Psoas muscle (tissue), 8 donors: ENCODE measurements at regions of chr9 and their contacts with region 1.

Region 1: GRCh38 chr9:93159601-93160471 is 24.1 kb upstream of the WNK2 start:
- DNase-seq: peak; percentile 82 to 93
- ATAC-seq: peak; percentile 93 to 99 (median 97)
- H3K4me3 ChIP-seq: peak overlapping the region; percentile 41
- H3K27ac ChIP-seq: no peak overlapping the region
- H3K4me1 ChIP-seq: peaks cover 9% of the 10 kb centered on the region
- H3K27me3 ChIP-seq: no peaks in the 10 kb centered on the region
- CTCF ChIP-seq: peak; percentile 97

Region 2: GRCh38 chr9:92770360-92770995 is 389.4 kb before region 1 on chr9:
- intact Hi-C with region 1: no loop called
- DNase-seq: no peak
- ATAC-seq: peak in 1 of 4 donors; percentile 22
- H3K4me3 ChIP-seq: no peak overlapping the region
- H3K27ac ChIP-seq: no peak overlapping the region
- H3K4me1 ChIP-seq: peaks cover 8% of the 10 kb centered on the region
- H3K27me3 ChIP-seq: no peaks in the 10 kb centered on the region
- CTCF ChIP-seq: no peak

Region 3: DNA sequence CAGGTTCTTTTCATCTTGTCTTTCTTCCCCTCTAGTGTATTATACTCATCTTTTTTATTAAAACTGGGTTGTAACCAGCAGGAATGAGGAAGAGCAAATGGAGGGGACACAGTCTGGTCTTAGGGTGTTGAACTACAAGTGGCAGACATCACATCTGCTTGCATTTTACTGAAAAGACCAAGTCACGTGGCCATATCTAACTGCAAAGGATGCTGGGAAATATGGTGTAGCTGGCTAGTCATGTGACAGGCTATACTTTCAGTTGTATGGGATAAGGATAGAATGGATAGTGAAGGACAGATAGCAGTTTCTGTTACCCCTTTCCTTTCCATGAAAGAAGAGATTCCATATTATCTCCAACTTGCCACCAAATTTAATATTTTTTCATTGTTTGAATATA is 225.5 kb before region 1 on chr9:
- intact Hi-C with region 1: no loop called
- DNase-seq: no peak
- ATAC-seq: no peak
- H3K4me3 ChIP-seq: no peak overlapping the region
- H3K27ac ChIP-seq: no peak overlapping the region
- H3K4me1 ChIP-seq: no peaks in the 10 kb centered on the region
- H3K27me3 ChIP-seq: no peaks in the 10 kb centered on the region
- CTCF ChIP-seq: no peak

Region 4: DNA sequence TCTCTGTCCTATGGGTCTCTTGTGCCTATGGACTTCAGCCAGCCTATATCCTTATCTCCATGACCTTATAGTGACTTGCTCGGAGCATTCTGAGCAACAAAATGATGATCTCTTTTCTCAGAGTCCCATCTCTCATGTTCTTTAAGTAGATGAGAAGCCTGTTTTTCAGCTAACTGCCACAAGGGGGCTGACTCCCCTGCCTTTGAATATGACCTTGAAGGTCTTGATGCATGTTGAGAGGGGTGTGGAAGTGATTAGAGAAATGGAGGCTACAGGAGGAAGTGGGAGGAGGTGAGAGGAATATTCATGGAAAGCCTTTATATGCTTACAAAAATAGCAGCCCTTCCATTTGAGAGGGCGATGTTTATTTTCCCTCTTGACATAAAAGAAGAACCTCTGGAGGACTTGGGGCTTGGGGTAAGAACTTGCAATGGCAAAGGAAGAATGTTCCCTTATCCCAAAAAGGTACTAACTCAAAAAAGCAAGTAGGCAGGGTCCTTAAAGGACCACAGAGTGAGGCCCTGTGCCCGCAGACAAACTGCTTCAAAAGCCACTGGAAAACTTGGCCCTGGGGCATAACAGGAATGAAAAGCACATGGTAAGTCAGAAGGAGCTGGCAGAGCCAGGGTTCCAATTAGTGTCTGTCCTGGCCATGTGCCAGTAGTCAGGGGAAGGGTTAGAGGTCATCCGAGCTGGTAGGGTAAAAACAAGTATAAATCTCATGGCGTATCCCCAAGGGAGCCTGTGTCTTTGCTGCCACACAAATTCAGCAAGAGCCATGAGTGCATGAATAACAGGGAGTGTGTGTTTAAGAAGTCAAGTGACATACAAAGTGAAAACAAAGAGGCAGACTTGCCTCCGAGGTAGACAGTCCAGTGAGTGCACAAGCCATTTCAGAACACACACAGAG is 173.4 kb before region 1 on chr9:
- intact Hi-C with region 1: no loop called
- DNase-seq: no peak
- ATAC-seq: no peak
- H3K4me3 ChIP-seq: no peak overlapping the region
- H3K27ac ChIP-seq: no peak overlapping the region
- H3K4me1 ChIP-seq: no peaks in the 10 kb centered on the region
- H3K27me3 ChIP-seq: no peaks in the 10 kb centered on the region
- CTCF ChIP-seq: peak; percentile 35

Region 5: GRCh38 chr9:93111371-93112115 is 48.3 kb before region 1 on chr9:
- intact Hi-C with region 1: loop called in 1 of 2 experiments (anchors 5 kb)
- DNase-seq: peak; percentile 25 to 46
- ATAC-seq: no peak
- H3K4me3 ChIP-seq: no peak overlapping the region
- H3K27ac ChIP-seq: no peak overlapping the region
- H3K4me1 ChIP-seq: peaks cover 14% of the 10 kb centered on the region
- H3K27me3 ChIP-seq: no peaks in the 10 kb centered on the region
- CTCF ChIP-seq: no peak

Region 6: DNA sequence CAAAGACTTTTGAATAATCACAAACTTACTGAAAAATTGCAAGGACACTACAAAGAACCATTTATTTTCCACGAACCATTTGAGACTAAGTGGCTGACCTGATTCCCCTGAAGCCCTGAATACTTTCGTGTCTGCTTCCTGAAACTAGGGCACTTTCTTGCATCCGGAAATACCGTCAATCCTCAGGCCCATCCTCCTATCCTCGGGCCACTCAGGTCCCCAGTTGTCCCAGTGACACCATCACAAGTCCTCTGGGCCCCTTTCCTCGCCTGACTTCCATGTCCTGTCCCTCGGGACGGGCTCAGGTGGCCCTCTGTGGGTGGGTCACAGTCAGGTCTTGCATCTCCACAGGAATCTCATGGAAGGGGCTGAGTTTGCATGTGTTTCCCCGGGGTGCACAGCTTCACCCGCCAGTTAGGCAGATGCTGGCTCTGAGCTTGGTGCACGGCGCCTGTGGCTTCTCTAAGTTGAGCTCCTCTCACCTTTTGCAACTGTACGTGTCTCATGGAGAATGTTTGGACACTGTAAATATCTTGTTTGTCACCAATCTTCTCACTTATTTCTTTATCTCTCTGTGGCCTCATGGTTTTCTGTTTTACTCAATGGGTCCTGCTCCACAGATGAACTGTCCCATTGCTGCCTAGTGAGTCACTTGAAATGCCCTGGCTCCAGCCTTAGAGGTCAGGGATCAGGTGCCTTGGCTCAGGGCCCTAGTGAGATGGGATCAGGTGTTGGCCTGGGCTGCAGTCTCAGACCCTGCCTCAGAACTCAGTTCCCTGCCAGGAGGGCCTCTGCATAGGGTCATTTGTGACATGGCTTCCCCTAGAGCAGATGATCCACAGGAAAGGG is 85.5 kb after region 1 on chr9:
- intact Hi-C with region 1: loop called in 1 of 2 experiments (anchors 5 kb)
- DNase-seq: peak; percentile 16 to 67
- ATAC-seq: peak; percentile 66 to 84 (median 80)
- H3K4me3 ChIP-seq: no peak overlapping the region
- H3K27ac ChIP-seq: no peak overlapping the region
- H3K4me1 ChIP-seq: peaks cover 22% of the 10 kb centered on the region
- H3K27me3 ChIP-seq: no peaks in the 10 kb centered on the region
- CTCF ChIP-seq: no peak

Region 7: DNA sequence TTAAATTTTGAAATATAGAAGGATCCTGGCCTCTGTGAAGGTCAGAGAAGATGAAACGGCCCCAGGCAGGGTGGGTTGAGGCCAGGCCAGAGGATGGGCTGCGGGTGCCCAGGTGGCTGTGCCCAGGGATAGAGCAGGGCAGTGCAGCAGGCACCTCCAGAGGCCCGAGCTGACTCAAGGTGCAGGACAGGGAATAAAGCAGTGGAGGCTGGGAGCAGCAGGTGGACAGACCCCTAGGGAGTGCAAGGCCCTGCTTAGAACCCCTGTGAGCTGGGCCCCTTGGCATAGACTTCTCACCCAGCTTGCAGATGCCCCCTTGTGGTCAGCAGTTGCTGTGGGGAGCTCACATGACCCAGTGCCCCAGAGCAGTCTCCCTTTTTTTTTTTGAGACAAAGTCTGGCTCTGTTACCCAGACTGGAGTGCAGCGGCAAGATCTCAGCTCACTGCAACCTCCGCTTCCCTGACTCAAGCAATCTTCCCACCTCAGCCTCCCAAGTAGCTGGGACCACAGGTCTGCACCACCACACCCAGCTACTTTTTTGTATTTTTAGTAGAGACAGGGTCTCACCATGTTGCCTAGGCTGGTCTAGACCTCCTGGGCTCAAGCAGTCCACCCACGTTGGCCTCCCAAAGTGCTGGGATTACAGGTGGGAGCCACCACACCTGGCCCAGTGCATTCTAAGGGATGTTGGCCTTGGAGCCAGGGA is 142.9 kb after region 1 on chr9:
- intact Hi-C with region 1: loop called (anchors 1 to 2 kb)
- DNase-seq: peak in 1 of 2 donors; percentile 47
- ATAC-seq: peak in 1 of 4 donors; percentile 42
- H3K4me3 ChIP-seq: no peak overlapping the region
- H3K27ac ChIP-seq: no peak overlapping the region
- H3K4me1 ChIP-seq: peaks cover 48% of the 10 kb centered on the region
- H3K27me3 ChIP-seq: no peaks in the 10 kb centered on the region
- CTCF ChIP-seq: peak; percentile 44

Region 8: GRCh38 chr9:93566408-93567270 is 406.8 kb after region 1 on chr9:
- intact Hi-C with region 1: loop called in 1 of 2 experiments (anchors 10 kb)
- DNase-seq: peak; percentile 99
- ATAC-seq: peak; percentile 97 to 99 (median 98)
- H3K4me3 ChIP-seq: peak overlapping the region; percentile 74
- H3K27ac ChIP-seq: peak overlapping the region; percentile 96
- H3K4me1 ChIP-seq: peaks cover 8% of the 10 kb centered on the region
- H3K27me3 ChIP-seq: no peaks in the 10 kb centered on the region
- CTCF ChIP-seq: peak; percentile 96